ENCODE measurements at regions of chr1 and their contacts with region 1.

Region 1: GRCh38 chr1:234114648-234115307 is 210.3 kb downstream of the SLC35F3 start:
- DNase-seq: peak; percentile 38
- ATAC-seq: peak; percentile 58
- H3K4me3 Mint-ChIP-seq: peak overlapping the region; percentile 14
- H3K27ac Mint-ChIP-seq: no peak overlapping the region
- H3K4me1 Mint-ChIP-seq: peaks cover 4% of the 10 kb centered on the region
- H3K27me3 Mint-ChIP-seq: peaks cover 14% of the 10 kb centered on the region
- CTCF ChIP-seq: peak; percentile 81

Region 2: GRCh38 chr1:233744779-233745513 is 369.8 kb before region 1 on chr1:
- CTCF ChIA-PET with region 1: no interaction called
- POLR2A ChIA-PET with region 1: no interaction called
- intact Hi-C with region 1: no loop called
- DNase-seq: no peak
- ATAC-seq: no peak
- H3K4me3 Mint-ChIP-seq: no peak overlapping the region
- H3K27ac Mint-ChIP-seq: no peak overlapping the region
- H3K4me1 Mint-ChIP-seq: no peaks in the 10 kb centered on the region
- H3K27me3 Mint-ChIP-seq: peaks cover 17% of the 10 kb centered on the region
- CTCF ChIP-seq: no peak

Region 3: GRCh38 chr1:234072793-234073192 is 42.0 kb before region 1 on chr1:
- CTCF ChIA-PET with region 1: no interaction called
- POLR2A ChIA-PET with region 1: no interaction called
- intact Hi-C with region 1: no loop called
- DNase-seq: no peak
- ATAC-seq: no peak
- H3K4me3 Mint-ChIP-seq: no peak overlapping the region
- H3K27ac Mint-ChIP-seq: no peak overlapping the region
- H3K4me1 Mint-ChIP-seq: no peaks in the 10 kb centered on the region
- H3K27me3 Mint-ChIP-seq: no peaks in the 10 kb centered on the region
- CTCF ChIP-seq: no peak

Region 4: DNA sequence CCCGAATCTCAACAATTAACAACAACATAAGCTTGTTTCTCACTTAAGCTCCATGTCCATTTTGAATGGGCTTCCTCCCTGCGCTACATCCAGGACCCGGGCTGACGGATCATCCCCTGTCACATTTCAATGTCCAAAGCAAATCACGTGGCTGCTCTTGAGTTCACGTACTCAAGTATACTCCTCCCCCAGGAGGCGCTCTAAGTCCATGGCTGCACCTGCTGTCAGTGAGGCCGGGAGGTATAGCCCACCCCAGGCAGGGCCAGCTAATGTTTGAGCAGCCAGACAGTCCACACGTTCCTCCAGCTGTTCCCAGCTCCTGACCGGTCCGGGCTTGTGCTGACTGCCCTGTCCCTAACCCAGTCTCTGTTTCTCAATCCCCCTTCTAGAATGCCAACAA is 10.5 kb after region 1 on chr1:
- CTCF ChIA-PET with region 1: interaction called, 34 read pairs
- POLR2A ChIA-PET with region 1: no interaction called
- intact Hi-C with region 1: no loop called
- DNase-seq: peak; percentile 75
- ATAC-seq: peak; percentile 78
- H3K4me3 Mint-ChIP-seq: no peak overlapping the region
- H3K27ac Mint-ChIP-seq: no peak overlapping the region
- H3K4me1 Mint-ChIP-seq: no peaks in the 10 kb centered on the region
- H3K27me3 Mint-ChIP-seq: peaks cover 14% of the 10 kb centered on the region
- CTCF ChIP-seq: peak; percentile 39

Region 5: GRCh38 chr1:234212764-234213657 is 98.2 kb after region 1 on chr1:
- CTCF ChIA-PET with region 1: interaction called, 10 read pairs
- POLR2A ChIA-PET with region 1: no interaction called
- intact Hi-C with region 1: no loop called
- DNase-seq: peak; percentile 53
- ATAC-seq: peak; percentile 66
- H3K4me3 Mint-ChIP-seq: no peak overlapping the region
- H3K27ac Mint-ChIP-seq: no peak overlapping the region
- H3K4me1 Mint-ChIP-seq: peaks cover 27% of the 10 kb centered on the region
- H3K27me3 Mint-ChIP-seq: peaks cover 47% of the 10 kb centered on the region
- CTCF ChIP-seq: peak; percentile 70

Measured in activated CD8-positive, alpha-beta T cell treated with anti-CD3 and anti-CD28 coated beads for 36 hours (primary cell).